Psoas muscle (tissue), 8 donors: ENCODE measurements at regions of chr6 and their contacts with region 1.

Region 1: GRCh38 chr6:56714982-56715456 is 72.3 kb upstream of the DST start:
- DNase-seq: no peak
- ATAC-seq: peak; percentile 46 to 72 (median 57)
- H3K4me3 ChIP-seq: no peak overlapping the region
- H3K27ac ChIP-seq: peak overlapping the region; percentile 58
- H3K4me1 ChIP-seq: peaks cover 53% of the 10 kb centered on the region
- H3K27me3 ChIP-seq: no peaks in the 10 kb centered on the region
- CTCF ChIP-seq: no peak

Region 2: GRCh38 chr6:56143796-56144195 is 571.2 kb before region 1 on chr6:
- intact Hi-C with region 1: no loop called
- DNase-seq: no peak
- ATAC-seq: no peak
- H3K4me3 ChIP-seq: no peak overlapping the region
- H3K27ac ChIP-seq: no peak overlapping the region
- H3K4me1 ChIP-seq: no peaks in the 10 kb centered on the region
- H3K27me3 ChIP-seq: no peaks in the 10 kb centered on the region
- CTCF ChIP-seq: no peak

Region 3: DNA sequence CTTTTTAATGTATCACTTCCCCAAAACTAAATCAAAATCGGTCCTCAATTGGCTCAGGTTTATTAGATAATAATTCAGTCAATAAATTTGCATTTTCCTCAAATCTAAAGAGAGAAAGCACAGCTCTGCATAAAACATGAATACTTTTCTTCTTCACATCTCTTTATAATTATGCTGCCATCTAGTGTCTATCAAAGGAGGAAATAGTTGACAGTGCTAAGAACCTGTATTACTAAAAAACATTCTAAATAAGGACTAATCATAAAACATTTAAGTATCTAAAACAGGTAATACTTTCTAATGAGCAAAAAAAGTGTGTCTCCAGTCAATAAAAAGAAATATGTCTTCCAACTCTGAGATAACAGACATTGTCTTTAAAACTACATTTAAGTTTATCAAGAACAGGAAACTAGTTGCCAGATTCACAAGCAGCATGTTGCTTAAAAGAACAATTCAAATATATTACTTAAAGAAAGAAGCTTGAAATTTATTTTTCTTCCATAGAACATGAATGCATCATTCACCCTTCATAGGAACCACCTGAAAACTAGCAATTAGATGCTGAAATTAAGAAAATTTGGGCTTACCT is 15.9 kb before region 1 on chr6:
- intact Hi-C with region 1: no loop called
- DNase-seq: no peak
- ATAC-seq: peak; percentile 54 to 81 (median 66)
- H3K4me3 ChIP-seq: no peak overlapping the region
- H3K27ac ChIP-seq: no peak overlapping the region
- H3K4me1 ChIP-seq: peaks cover 27% of the 10 kb centered on the region
- H3K27me3 ChIP-seq: no peaks in the 10 kb centered on the region
- CTCF ChIP-seq: peak; percentile 64

Region 4: DNA sequence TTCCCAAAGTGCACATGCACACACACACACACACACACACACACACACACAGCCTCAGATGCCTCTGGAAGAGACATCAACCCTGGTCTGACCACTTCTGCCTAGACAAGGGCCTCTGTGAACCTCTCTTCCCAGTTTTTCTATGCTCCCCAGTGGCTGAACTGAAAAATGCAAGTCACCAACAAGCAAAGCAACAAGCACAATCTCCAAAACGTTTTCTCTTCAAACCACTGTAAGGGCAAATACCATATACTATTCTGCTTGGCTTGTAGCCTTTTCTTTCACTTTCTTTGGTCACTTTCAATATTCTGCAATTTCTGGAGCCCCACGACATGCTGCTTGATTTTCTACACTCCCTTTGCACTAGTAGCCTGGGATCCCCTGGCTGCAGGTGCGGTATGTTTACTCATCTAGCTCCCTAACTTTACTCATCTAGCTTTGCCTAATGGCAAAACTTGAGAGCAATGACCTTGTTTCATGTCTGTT is 49.1 kb after region 1 on chr6:
- intact Hi-C with region 1: loop called (anchors 5 kb)
- DNase-seq: no peak
- ATAC-seq: peak; percentile 41 to 69 (median 58)
- H3K4me3 ChIP-seq: no peak overlapping the region
- H3K27ac ChIP-seq: peak overlapping the region; percentile 78
- H3K4me1 ChIP-seq: peaks cover 64% of the 10 kb centered on the region
- H3K27me3 ChIP-seq: no peaks in the 10 kb centered on the region
- CTCF ChIP-seq: peak; percentile 31

Region 5: DNA sequence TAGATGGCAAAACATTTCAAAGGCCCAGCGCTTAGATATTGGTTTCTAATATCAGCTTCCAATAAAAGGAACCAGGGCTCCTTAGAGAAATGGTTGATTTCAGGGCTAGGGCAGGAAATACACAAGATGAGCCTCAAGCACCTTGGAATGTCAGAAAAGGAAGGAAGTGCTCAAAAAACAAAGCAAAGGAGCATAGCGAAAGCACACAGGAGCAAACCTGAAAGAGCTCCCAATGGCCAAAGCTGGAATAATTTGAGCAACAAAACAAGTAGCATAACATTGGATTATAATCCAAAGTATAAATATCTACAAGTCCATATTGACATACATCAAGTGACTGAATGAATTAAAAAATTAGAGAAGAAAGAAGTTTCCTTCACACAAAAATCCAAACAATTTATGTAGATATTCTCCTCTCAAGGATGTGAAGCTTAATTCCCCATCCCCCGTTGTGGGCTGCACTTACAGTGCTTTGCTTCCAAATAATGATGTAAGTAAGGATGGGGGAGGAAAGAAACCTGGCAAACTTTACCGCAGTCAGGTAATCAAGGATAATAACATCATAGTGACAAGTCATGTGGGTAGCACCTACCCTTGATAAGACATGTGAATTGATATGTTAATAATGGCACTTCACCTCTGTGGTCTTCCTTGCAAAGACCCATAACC is 60.6 kb after region 1 on chr6:
- intact Hi-C with region 1: no loop called
- DNase-seq: no peak
- ATAC-seq: no peak
- H3K4me3 ChIP-seq: no peak overlapping the region
- H3K27ac ChIP-seq: peak overlapping the region; percentile 38
- H3K4me1 ChIP-seq: peaks cover 53% of the 10 kb centered on the region
- H3K27me3 ChIP-seq: no peaks in the 10 kb centered on the region
- CTCF ChIP-seq: no peak

Region 6: GRCh38 chr6:56851541-56852259 is 136.7 kb after region 1 on chr6:
- intact Hi-C with region 1: loop called in 1 of 2 experiments (anchors 5 kb)
- DNase-seq: peak in 1 of 2 donors; percentile 22
- ATAC-seq: peak; percentile 80 to 94 (median 90)
- H3K4me3 ChIP-seq: peak overlapping the region; percentile 63
- H3K27ac ChIP-seq: peak overlapping the region; percentile 34
- H3K4me1 ChIP-seq: peaks cover 18% of the 10 kb centered on the region
- H3K27me3 ChIP-seq: no peaks in the 10 kb centered on the region
- CTCF ChIP-seq: peak; percentile 65